ENCODE measurements at regions of chr20 and their contacts with region 1.

Region 1: DNA sequence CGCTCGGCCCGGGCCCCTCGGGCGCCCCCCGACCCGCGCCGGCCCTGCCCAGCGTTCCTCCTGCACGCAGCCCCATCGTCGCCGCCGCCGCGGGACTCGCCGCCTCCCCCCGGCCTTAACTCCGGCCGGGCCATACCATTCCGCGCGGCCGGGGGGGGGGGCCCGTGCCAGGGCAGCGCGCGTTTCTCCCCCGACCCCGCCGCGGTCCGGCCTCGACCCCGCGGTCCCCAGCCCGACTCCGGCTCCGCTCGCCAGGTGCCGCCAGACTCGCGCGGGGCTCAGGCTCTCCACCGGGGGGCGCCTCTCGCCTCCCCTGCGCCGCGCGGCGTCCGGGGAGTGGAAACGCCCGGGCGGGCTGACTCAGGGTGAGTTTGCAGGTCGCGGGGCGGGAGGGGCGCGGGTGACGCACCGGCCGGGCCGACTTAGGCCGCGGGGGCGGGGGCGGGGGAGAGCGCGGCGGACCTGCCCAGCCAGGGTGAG is at the start of gene SRXN1:
- H3K4me3 Mint-ChIP-seq: peak within 1 kb of the TSS; percentile 88
- H3K27ac Mint-ChIP-seq: peak within 1 kb of the TSS; percentile 90
- H3K4me1 Mint-ChIP-seq: peaks cover 88% of the 10 kb centered on the region
- H3K27me3 Mint-ChIP-seq: no peaks in the 10 kb centered on the region

Region 2: GRCh38 chr20:667391-667964 is 14.3 kb after region 1 on chr20:
- intact Hi-C with region 1: loop called (anchors 2 kb)
- H3K4me3 Mint-ChIP-seq: no peak overlapping the region
- H3K27ac Mint-ChIP-seq: no peak overlapping the region
- H3K4me1 Mint-ChIP-seq: peaks cover 64% of the 10 kb centered on the region
- H3K27me3 Mint-ChIP-seq: peaks cover 59% of the 10 kb centered on the region

Region 3: DNA sequence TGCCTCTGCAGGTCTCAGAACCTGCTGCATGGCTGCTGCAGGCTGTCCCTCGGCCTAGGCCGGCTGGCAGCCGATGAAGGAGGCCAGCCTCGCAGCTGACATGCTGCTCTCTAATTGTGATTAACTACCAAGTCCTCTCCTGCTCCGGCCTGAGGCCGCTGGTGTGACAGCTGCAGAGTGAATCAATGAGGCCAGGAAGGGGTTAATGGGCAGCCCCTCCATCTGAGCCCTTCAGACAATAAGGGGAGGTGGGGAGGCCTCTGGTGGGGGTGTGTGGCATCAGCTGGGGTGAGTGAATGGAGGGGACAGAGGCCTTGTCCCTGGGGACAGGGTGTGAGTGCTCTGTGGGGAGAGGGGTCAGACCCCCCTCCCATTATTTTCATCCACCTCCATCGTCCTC is 80.7 kb after region 1 on chr20:
- intact Hi-C with region 1: loop called (anchors 5 kb)
- H3K4me3 Mint-ChIP-seq: no peak overlapping the region
- H3K27ac Mint-ChIP-seq: no peak overlapping the region
- H3K4me1 Mint-ChIP-seq: peaks cover under 1% of the 10 kb centered on the region
- H3K27me3 Mint-ChIP-seq: peaks cover 28% of the 10 kb centered on the region

Region 4: DNA sequence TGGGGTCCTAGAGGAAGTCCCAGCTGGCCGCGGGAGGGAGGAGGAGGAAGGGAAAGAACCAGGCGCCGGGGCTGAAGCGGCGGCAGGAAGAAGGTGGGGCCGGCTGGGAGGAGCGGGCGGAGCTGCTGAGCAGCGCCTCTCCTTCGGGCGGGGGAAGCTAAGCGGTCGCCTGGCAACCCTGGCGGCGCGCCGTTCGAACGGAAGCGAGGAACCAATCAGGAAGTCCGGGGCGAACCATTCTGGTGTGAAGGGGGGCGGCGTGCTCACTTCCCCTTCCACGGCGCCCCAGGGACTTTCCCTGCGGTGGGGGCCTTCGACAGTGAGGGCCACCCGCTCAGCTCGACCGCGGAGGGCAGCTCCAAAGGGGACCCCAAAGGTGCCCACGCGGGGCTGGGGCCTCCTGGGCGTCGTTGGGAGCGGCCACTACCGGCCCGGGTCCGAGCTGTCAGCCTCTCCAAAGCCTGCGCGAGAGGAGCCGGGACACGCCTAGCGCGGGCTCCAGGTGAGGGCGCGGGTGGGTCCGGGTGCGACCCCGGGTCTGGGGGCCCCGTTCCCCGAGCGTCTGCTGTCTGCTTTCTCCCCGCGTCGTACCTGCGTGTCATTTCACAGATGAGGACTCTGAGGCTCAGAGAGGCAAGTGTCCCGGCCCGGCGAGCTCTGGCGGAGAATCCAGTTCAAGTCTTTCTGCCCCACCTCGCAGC is 180.4 kb after region 1 on chr20 and contains the start of gene FAM110A:
- intact Hi-C with region 1: loop called (anchors 5 kb)
- H3K4me3 Mint-ChIP-seq: peak within 1 kb of the TSS; percentile 96
- H3K27ac Mint-ChIP-seq: peak within 1 kb of the TSS; percentile 96
- H3K4me1 Mint-ChIP-seq: peaks cover 53% of the 10 kb centered on the region
- H3K27me3 Mint-ChIP-seq: no peaks in the 10 kb centered on the region